Body of pancreas (tissue), 4 donors: ENCODE measurements at regions of chr20 and their contacts with region 1.

Region 1: GRCh38 chr20:5141615-5142014 is 14.8 kb downstream of the CDS2 start:
- DNase-seq: no peak
- ATAC-seq: no peak
- H3K4me3 ChIP-seq: no peak overlapping the region
- H3K27ac ChIP-seq: no peak overlapping the region
- H3K4me1 ChIP-seq: peaks cover 30% of the 10 kb centered on the region
- H3K27me3 ChIP-seq: no peaks in the 10 kb centered on the region
- CTCF ChIP-seq: no peak
- POLR2A ChIP-seq: no peak

Region 2: DNA sequence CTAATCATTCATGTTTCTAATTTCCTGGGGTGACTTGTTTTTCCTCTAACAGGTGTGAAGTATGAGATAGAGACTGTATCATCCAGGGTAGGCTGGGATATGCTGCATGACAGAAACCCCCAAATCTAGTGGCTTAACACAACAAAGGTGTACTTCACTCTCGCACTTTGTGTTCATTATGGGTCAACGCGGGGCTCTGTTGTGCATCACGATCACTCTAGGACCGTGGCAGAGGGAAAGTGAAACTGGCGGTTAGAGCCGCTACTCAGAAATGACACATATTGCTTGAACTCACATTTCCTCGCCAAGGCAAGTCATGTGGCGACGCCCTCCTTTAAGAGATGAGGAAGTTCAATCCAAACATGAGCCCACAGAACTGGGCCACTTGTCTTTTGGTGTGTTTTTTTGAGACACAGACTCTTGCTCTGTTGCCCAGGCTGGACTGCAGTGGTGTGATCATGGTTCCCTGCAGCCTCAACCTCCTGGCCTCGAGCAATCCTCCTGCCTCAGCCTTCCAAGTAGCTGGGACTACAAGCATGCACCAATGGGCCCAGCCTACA is 63.1 kb before region 1 on chr20:
- intact Hi-C with region 1: no loop called
- DNase-seq: peak in 3 of 4 donors; percentile 30 to 80 (median 36)
- ATAC-seq: peak; percentile 40
- H3K4me3 ChIP-seq: no peak overlapping the region
- H3K27ac ChIP-seq: peak overlapping the region in 2 of 4 donors; percentile 54 to 57
- H3K4me1 ChIP-seq: peaks cover 6% of the 10 kb centered on the region
- H3K27me3 ChIP-seq: no peaks in the 10 kb centered on the region
- CTCF ChIP-seq: no peak
- POLR2A ChIP-seq: peak in 1 of 3 donors; percentile 11

Region 3: GRCh38 chr20:5177071-5177470 is 35.5 kb after region 1 on chr20:
- intact Hi-C with region 1: loop called (anchors 5 kb)
- DNase-seq: no peak
- ATAC-seq: no peak
- H3K4me3 ChIP-seq: no peak overlapping the region
- H3K27ac ChIP-seq: no peak overlapping the region
- H3K4me1 ChIP-seq: no peaks in the 10 kb centered on the region
- H3K27me3 ChIP-seq: no peaks in the 10 kb centered on the region
- CTCF ChIP-seq: no peak
- POLR2A ChIP-seq: no peak